IMR-90 (cell line): ENCODE measurements at regions of chr2 and their contacts with region 1.

Region 1: GRCh38 chr2:166127217-166128155 is at the start of gene SCN1A:
- DNase-seq: peak; percentile 56
- ATAC-seq: peak; percentile 51
- H3K4me3 ChIP-seq: no peak within 1 kb of the TSS
- H3K27ac ChIP-seq: no peak within 1 kb of the TSS
- H3K4me1 ChIP-seq: no peaks in the 10 kb centered on the region
- H3K27me3 ChIP-seq: peaks cover 8% of the 10 kb centered on the region
- CTCF ChIP-seq: peak; percentile 83
- POLR2A ChIP-seq: no peak
- RAD21 ChIP-seq: peak; percentile 82
- total RNA-seq, gene SCN1A: under 0.01 TPM in 2 replicates

Region 2: GRCh38 chr2:165376571-165376975 is 750.9 kb before region 1 on chr2:
- CTCF ChIA-PET with region 1: no interaction called
- POLR2A ChIA-PET with region 1: no interaction called
- dilution Hi-C with region 1: no loop called
- in situ Hi-C with region 1: loop called (anchors 25 kb)
- intact Hi-C with region 1: no loop called
- DNase-seq: no peak
- ATAC-seq: no peak
- H3K4me3 ChIP-seq: no peak overlapping the region
- H3K27ac ChIP-seq: no peak overlapping the region
- H3K4me1 ChIP-seq: no peaks in the 10 kb centered on the region
- H3K27me3 ChIP-seq: no peaks in the 10 kb centered on the region
- CTCF ChIP-seq: no peak
- POLR2A ChIP-seq: no peak
- RAD21 ChIP-seq: no peak

Region 3: DNA sequence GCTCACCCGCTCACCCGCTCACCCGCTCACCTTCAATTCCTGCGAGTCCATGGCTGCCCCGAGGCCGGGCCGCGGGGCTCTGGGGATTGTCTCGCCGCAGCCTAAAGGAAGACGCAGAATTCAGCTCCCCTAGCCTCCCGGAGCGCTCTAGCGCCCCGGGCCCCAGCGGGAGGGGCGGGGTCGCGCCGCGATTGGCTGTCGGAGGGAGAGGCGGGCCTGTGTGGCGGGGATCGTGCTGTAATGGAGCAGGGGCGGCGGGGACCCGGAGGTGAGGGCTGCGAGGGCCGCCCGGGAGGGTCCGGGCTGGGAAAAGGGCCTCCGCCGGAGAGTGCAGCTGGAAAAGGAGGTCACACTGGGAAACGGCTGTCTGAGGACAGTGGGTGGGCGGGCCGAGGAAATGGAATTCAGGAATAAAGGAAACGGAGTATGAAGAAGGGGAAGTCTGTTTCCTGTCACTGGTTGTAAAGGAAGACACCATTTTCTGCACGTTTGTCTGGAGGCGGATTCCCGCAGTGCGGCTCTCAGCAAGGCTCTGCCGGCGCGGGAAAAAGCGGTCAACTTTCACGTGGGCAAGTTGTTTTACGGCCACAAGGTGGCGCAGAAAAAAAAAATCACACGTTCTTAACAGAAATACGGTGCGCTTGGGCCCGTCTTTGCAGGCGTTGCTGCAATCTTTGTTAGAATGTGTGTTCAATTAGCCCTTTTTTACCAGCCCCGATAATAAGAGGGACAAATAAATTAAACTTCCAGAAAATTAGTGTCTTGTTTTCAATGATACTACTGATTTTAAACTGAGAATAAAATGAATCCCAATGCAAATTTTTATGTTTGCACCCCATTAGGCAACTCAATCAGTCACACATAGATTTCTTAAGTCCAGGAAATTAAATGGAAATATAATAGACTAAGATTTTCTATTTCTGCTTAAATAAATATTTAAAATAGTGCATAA is 173.6 kb before region 1 on chr2 and contains the start of gene TTC21B:
- CTCF ChIA-PET with region 1: interaction called, 7 read pairs
- POLR2A ChIA-PET with region 1: interaction called, 7 read pairs
- dilution Hi-C with region 1: no loop called
- in situ Hi-C with region 1: no loop called
- intact Hi-C with region 1: loop called (anchors 1 kb)
- DNase-seq: peak; percentile 95
- ATAC-seq: peak; percentile 99
- H3K4me3 ChIP-seq: peak within 1 kb of the TSS; percentile 64
- H3K27ac ChIP-seq: peak within 1 kb of the TSS; percentile 45
- H3K4me1 ChIP-seq: no peaks in the 10 kb centered on the region
- H3K27me3 ChIP-seq: no peaks in the 10 kb centered on the region
- CTCF ChIP-seq: peak; percentile 84
- POLR2A ChIP-seq: peak; percentile 81
- RAD21 ChIP-seq: peak; percentile 54
- total RNA-seq, gene TTC21B: 17.2 and 23.1 TPM in 2 replicates

Region 4: DNA sequence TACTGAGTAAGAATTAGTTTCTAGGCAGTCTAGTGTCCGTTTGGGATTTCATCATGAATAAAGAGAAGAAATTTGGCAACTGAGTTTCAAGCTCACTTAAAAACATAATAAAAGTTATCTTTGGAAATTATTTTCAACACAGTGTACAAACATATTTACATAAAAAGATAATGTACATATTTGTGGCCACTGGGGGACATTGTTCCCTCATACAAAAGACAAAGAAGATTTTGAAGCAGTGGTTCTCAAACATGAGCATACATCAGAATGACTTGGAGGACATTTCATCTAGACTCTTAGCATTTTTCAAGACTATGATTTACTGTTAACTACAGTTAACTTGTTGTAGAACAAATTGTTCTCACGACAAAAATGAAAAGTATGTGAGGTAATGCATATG is 158.3 kb before region 1 on chr2:
- CTCF ChIA-PET with region 1: no interaction called
- POLR2A ChIA-PET with region 1: no interaction called
- dilution Hi-C with region 1: no loop called
- in situ Hi-C with region 1: loop called (anchors 5 kb)
- intact Hi-C with region 1: no loop called
- DNase-seq: no peak
- ATAC-seq: no peak
- H3K4me3 ChIP-seq: no peak overlapping the region
- H3K27ac ChIP-seq: no peak overlapping the region
- H3K4me1 ChIP-seq: no peaks in the 10 kb centered on the region
- H3K27me3 ChIP-seq: no peaks in the 10 kb centered on the region
- CTCF ChIP-seq: no peak
- POLR2A ChIP-seq: no peak
- RAD21 ChIP-seq: no peak

Region 5: GRCh38 chr2:166057370-166058164 is 69.9 kb before region 1 on chr2:
- CTCF ChIA-PET with region 1: interaction called, 18 read pairs
- POLR2A ChIA-PET with region 1: no interaction called
- dilution Hi-C with region 1: no loop called
- in situ Hi-C with region 1: loop called (anchors 5 kb)
- intact Hi-C with region 1: loop called (anchors 1 kb)
- DNase-seq: peak; percentile 45
- ATAC-seq: peak; percentile 44; the same call in 1 of the 2 replicates
- H3K4me3 ChIP-seq: no peak overlapping the region
- H3K27ac ChIP-seq: no peak overlapping the region
- H3K4me1 ChIP-seq: no peaks in the 10 kb centered on the region
- H3K27me3 ChIP-seq: no peaks in the 10 kb centered on the region
- CTCF ChIP-seq: peak; percentile 66
- POLR2A ChIP-seq: no peak
- RAD21 ChIP-seq: peak; percentile 68

Region 6: DNA sequence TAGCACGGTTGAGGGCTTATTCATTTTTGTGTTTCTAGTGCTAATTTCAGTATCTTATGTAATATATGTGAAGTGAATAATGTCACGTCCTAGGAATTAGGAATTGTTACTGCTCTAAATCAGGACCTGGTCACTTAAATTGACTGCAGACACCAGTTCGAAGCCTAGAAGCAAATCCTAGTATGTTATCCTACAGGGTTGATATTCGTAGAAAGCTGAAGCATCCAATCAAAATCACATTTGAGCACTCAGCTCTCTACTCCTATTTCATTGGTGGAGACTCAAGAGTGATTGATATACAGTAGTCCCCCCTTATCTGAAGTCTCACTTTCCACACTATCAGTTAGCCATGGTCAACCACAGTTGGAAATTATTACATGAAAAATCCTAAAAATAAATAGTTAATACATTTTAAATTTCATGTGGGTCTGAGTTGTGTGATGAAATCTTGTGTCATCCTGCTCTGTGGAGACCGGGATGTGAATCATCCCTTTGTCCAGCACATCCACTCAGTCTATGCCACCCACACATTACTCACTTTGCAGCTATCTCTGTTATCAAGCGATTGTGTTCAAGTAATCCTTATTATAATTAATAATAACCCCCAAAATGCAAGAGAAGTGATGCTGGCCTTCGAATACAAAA is 283.5 kb after region 1 on chr2:
- CTCF ChIA-PET with region 1: no interaction called
- POLR2A ChIA-PET with region 1: interaction called, 14 read pairs
- dilution Hi-C with region 1: no loop called
- in situ Hi-C with region 1: no loop called
- intact Hi-C with region 1: loop called (anchors 5 kb)
- DNase-seq: peak; percentile 96
- ATAC-seq: peak; percentile 95
- H3K4me3 ChIP-seq: peak overlapping the region; percentile 4; the same call in 1 of the 2 replicates
- H3K27ac ChIP-seq: no peak overlapping the region
- H3K4me1 ChIP-seq: peaks cover 4% of the 10 kb centered on the region
- H3K27me3 ChIP-seq: no peaks in the 10 kb centered on the region
- CTCF ChIP-seq: no peak
- POLR2A ChIP-seq: no peak
- RAD21 ChIP-seq: no peak

Region 7: DNA sequence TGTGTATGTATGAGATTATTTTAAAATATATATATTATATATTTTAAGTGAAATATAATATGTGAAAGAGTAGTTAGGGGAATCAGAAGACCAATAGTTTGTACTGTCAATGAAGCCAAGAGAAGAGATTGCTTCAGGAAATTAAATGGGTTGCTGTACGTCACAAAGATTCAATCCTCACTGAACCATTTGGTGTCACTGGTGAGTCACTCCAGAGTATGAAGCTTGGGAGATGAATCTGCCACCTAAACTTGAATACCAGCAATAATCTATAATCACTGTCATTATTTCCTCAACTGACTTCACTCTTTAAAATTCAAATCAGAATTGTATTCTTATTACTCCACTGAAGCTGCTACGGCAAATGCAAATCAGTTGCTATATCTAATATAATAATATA is 290.2 kb after region 1 on chr2:
- CTCF ChIA-PET with region 1: no interaction called
- POLR2A ChIA-PET with region 1: no interaction called
- dilution Hi-C with region 1: no loop called
- in situ Hi-C with region 1: no loop called
- intact Hi-C with region 1: loop called (anchors 5 kb)
- DNase-seq: peak; percentile 65
- ATAC-seq: no peak; the same call in 1 of the 2 replicates
- H3K4me3 ChIP-seq: no peak overlapping the region
- H3K27ac ChIP-seq: no peak overlapping the region
- H3K4me1 ChIP-seq: no peaks in the 10 kb centered on the region
- H3K27me3 ChIP-seq: no peaks in the 10 kb centered on the region
- CTCF ChIP-seq: no peak; the same call in 1 of the 2 replicates
- POLR2A ChIP-seq: no peak
- RAD21 ChIP-seq: 0 out of 2 replicates have a peak, but pooled peaks have one; percentile 4